H1 (cell line): ENCODE measurements at regions of chr5 and their contacts with region 1.

Region 1: GRCh38 chr5:59496524-59497134 is 396.9 kb downstream of the PDE4D start:
- DNase-seq: peak in 1 of 2 experiments; percentile 64
- H3K4me3 ChIP-seq: no peak overlapping the region
- H3K27ac ChIP-seq: no peak overlapping the region
- H3K4me1 ChIP-seq: no peaks in the 10 kb centered on the region
- H3K27me3 ChIP-seq: no peaks in the 10 kb centered on the region
- CTCF ChIP-seq: peak; percentile 55 to 72 (median 71)
- EP300 ChIP-seq: no peak
- POLR2A ChIP-seq: no peak
- RAD21 ChIP-seq: peak; percentile 64 to 72

Region 2: GRCh38 chr5:59569608-59570334 is 73.1 kb after region 1 on chr5:
- CTCF ChIA-PET with region 1: interaction called, 13 read pairs
- POLR2A ChIA-PET with region 1: no interaction called
- DNase-seq: no peak
- H3K4me3 ChIP-seq: no peak overlapping the region
- H3K27ac ChIP-seq: no peak overlapping the region
- H3K4me1 ChIP-seq: peaks cover 0 to 6% (median 5%) of the 10 kb centered on the region in 4 experiments; a peak in 3 of 7 replicates
- H3K27me3 ChIP-seq: no peaks in the 10 kb centered on the region
- CTCF ChIP-seq: no peak
- EP300 ChIP-seq: no peak
- POLR2A ChIP-seq: no peak
- RAD21 ChIP-seq: peak; percentile 4 to 34; a peak in 3 of 4 replicates

Region 3: DNA sequence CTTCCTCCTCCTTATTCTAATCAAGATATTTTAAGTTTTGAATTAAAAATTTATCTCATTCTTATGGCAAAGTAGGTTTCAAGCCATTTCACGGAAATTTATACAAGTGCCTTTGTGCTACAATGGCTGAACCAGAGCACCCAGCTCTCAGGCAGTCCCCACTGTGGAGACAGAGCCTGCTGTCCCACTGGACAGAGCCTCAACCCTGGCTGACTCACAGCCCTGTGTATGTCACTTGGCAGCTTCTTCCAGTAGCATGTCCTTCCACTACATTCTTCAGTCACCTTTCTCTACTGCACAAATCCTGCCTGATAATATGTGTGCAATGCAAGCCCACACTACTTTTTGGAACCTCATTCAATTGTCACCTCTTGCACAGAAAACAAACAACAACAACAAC is 143.8 kb after region 1 on chr5:
- CTCF ChIA-PET with region 1: no interaction called
- POLR2A ChIA-PET with region 1: no interaction called
- DNase-seq: no peak
- H3K4me3 ChIP-seq: no peak overlapping the region
- H3K27ac ChIP-seq: no peak overlapping the region
- H3K4me1 ChIP-seq: peaks cover 0 to 2% (median 0%) of the 10 kb centered on the region in 4 experiments; a peak in 1 of 7 replicates
- H3K27me3 ChIP-seq: no peaks in the 10 kb centered on the region
- CTCF ChIP-seq: no peak
- EP300 ChIP-seq: no peak
- POLR2A ChIP-seq: no peak
- RAD21 ChIP-seq: no peak